Mammary epithelial cell (primary cell): ENCODE measurements at regions of chr12 and their contacts with region 1.

Region 1: GRCh38 chr12:27523642-27524493 is at the start of gene PPFIBP1:
- DNase-seq: peak; percentile 99
- H3K4me3 ChIP-seq: peak within 1 kb of the TSS; percentile 84 to 94 (median 86)
- H3K27ac ChIP-seq: peak within 1 kb of the TSS; percentile 88
- H3K4me1 ChIP-seq: peaks cover 18% of the 10 kb centered on the region
- H3K27me3 ChIP-seq: no peaks in the 10 kb centered on the region
- CTCF ChIP-seq: peak; percentile 30 to 65
- total RNA-seq, gene PPFIBP1: 114 to 136 TPM

Region 2: DNA sequence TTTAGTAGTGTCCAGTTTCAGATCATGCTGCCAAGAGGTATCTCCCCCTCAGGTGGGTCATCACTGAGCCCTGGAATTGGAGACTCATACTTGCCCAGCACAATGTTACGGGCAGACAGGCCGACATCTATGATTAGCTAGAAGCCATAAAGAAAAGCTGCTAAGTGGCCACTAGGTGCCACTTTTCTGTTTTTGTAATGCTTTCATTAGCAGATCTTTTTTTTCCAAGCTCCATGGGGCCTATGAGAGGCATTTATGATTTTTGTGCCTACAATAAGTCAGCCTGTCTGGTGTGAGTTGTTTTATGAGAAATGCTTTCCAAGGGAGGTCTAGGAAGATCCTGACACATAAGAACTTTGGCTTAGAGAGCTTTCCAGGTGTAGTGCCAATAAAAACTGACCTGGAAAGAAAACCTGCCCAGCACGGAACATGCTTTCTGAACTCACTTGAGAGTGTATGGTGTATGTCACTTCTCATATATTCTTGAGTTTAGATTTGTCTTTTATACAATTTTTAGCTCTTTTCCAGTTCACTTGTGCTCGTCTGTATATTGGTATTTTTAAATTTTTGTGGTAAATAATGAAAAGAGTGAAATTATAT is 99.1 kb before region 1 on chr12:
- CTCF ChIA-PET with region 1: interaction called, 9 read pairs
- dilution Hi-C with region 1: no loop called
- in situ Hi-C with region 1: no loop called
- intact Hi-C with region 1: loop called (anchors 1 kb)
- DNase-seq: peak; percentile 38
- H3K4me3 ChIP-seq: no peak overlapping the region
- H3K27ac ChIP-seq: no peak overlapping the region
- H3K4me1 ChIP-seq: peaks cover 3% of the 10 kb centered on the region
- H3K27me3 ChIP-seq: no peaks in the 10 kb centered on the region
- CTCF ChIP-seq: peak; percentile 56 to 65

Region 3: DNA sequence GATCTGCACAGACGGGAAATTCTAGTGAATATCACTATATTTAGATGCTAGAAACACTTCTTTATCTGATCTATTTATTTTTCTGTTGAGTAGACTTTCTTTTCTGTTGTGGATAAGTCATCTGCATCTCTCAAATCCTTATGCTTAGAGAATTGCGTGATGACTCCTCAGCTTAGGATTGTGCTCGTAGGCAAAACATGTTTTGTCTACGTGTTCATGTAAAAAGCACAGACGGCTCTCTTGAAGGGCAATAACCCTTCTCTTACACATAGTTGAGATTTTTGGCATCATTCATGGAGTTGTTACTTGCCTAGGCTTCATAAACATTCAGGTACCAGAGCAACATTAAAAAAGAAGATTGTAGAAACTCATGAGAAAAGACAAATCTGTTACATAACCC is 18.8 kb after region 1 on chr12:
- CTCF ChIA-PET with region 1: no interaction called
- dilution Hi-C with region 1: no loop called
- in situ Hi-C with region 1: no loop called
- intact Hi-C with region 1: loop called (anchors 1 kb)
- DNase-seq: peak; percentile 92
- H3K4me3 ChIP-seq: peak overlapping the region in 2 of 3 experiments; percentile 1 to 6
- H3K27ac ChIP-seq: peak overlapping the region; percentile 91
- H3K4me1 ChIP-seq: peaks cover 54% of the 10 kb centered on the region
- H3K27me3 ChIP-seq: no peaks in the 10 kb centered on the region
- CTCF ChIP-seq: no peak

Region 4: DNA sequence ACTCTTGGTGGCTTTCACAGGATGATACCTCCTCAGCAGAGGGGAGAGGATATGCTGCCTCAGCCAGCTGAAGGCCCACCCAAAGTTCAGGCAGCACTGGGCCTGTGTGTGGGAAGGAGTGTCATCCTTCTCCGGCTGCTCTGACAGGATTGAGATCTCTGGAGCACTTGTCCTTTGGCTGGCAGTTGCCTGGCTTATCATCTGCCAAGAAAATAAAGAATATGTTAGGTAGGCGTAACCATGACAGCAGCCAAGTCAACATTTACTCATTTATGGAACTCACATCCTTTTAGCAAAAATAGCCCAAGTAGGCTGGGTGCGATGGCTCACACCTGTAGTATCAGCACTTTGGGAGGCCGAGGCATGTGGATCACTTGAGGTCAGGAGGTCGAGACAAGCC is 68.7 kb after region 1 on chr12:
- CTCF ChIA-PET with region 1: interaction called, 6 read pairs
- dilution Hi-C with region 1: no loop called
- in situ Hi-C with region 1: no loop called
- intact Hi-C with region 1: loop called (anchors 1 kb)
- DNase-seq: peak; percentile 96
- H3K4me3 ChIP-seq: no peak overlapping the region
- H3K27ac ChIP-seq: peak overlapping the region; percentile 99
- H3K4me1 ChIP-seq: peaks cover 65% of the 10 kb centered on the region
- H3K27me3 ChIP-seq: no peaks in the 10 kb centered on the region
- CTCF ChIP-seq: no peak

Region 5: DNA sequence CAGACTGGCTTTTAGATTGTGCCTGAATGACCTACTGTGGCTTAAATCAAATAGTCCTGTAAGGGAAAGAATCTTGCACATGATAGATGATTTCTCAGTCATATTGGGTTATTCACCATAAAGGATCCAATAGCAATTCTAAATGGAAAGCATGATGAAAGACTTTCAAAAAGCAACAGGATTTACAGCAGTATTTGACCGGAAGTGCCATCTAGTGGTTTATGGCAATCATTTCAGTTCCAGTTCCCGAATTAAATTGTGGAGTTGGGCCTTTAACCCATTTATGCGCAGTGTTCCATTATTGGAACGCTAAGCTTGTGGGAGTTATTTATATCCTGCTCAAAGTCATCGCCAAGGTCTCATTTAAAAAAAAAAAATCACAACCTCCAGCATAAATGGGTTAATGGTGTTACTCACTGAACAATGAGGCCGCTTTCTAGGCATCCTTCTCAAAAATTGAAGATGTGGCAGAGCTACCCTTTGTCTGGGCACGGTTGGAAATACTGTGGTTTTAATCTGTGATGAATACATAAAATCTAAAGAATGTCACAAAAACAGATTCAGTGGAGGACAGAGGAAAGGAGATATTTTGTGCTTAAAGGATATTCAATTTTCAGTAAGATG is 111.6 kb after region 1 on chr12:
- CTCF ChIA-PET with region 1: no interaction called
- dilution Hi-C with region 1: no loop called
- in situ Hi-C with region 1: no loop called
- intact Hi-C with region 1: loop called (anchors 1 kb)
- DNase-seq: peak; percentile 46
- H3K4me3 ChIP-seq: no peak overlapping the region
- H3K27ac ChIP-seq: no peak overlapping the region
- H3K4me1 ChIP-seq: peaks cover 6% of the 10 kb centered on the region
- H3K27me3 ChIP-seq: no peaks in the 10 kb centered on the region
- CTCF ChIP-seq: peak; percentile 54 to 69